Mammary epithelial cell (primary cell): ENCODE measurements at regions of chr9 and their contacts with region 1.

Region 1: GRCh38 chr9:98034593-98035546 is 21.7 kb upstream of the NANS start:
- DNase-seq: peak; percentile 50
- H3K4me3 ChIP-seq: no peak overlapping the region
- H3K27ac ChIP-seq: no peak overlapping the region
- H3K4me1 ChIP-seq: peaks cover 8% of the 10 kb centered on the region
- H3K27me3 ChIP-seq: no peaks in the 10 kb centered on the region
- CTCF ChIP-seq: peak; percentile 85

Region 2: GRCh38 chr9:97703437-97704344 is 331.2 kb before region 1 on chr9:
- CTCF ChIA-PET with region 1: no interaction called
- dilution Hi-C with region 1: no loop called
- in situ Hi-C with region 1: no loop called
- intact Hi-C with region 1: loop called (anchors 5 kb)
- DNase-seq: peak; percentile 94
- H3K4me3 ChIP-seq: peak overlapping the region in 1 of 3 experiments; percentile 15
- H3K27ac ChIP-seq: peak overlapping the region; percentile 73
- H3K4me1 ChIP-seq: peaks cover 37% of the 10 kb centered on the region
- H3K27me3 ChIP-seq: peaks cover 6% of the 10 kb centered on the region
- CTCF ChIP-seq: no peak

Region 3: GRCh38 chr9:97906236-97906831 is 128.5 kb before region 1 on chr9:
- CTCF ChIA-PET with region 1: interaction called, 12 read pairs
- dilution Hi-C with region 1: no loop called
- in situ Hi-C with region 1: no loop called
- intact Hi-C with region 1: no loop called
- DNase-seq: no peak
- H3K4me3 ChIP-seq: no peak overlapping the region
- H3K27ac ChIP-seq: no peak overlapping the region
- H3K4me1 ChIP-seq: peaks cover 21% of the 10 kb centered on the region
- H3K27me3 ChIP-seq: no peaks in the 10 kb centered on the region
- CTCF ChIP-seq: no peak

Region 4: GRCh38 chr9:97982683-97983588 is 51.9 kb before region 1 on chr9 and contains the start of gene ANP32B:
- CTCF ChIA-PET with region 1: no interaction called
- dilution Hi-C with region 1: no loop called
- in situ Hi-C with region 1: no loop called
- intact Hi-C with region 1: loop called (anchors 2 kb)
- DNase-seq: peak; percentile 86
- H3K4me3 ChIP-seq: peak within 1 kb of the TSS; percentile 82 to 90 (median 88)
- H3K27ac ChIP-seq: peak within 1 kb of the TSS; percentile 94
- H3K4me1 ChIP-seq: peaks cover 43% of the 10 kb centered on the region
- H3K27me3 ChIP-seq: no peaks in the 10 kb centered on the region
- CTCF ChIP-seq: peak; percentile 65 to 70
- total RNA-seq, gene ANP32B: 8.2 to 164 TPM

Region 5: DNA sequence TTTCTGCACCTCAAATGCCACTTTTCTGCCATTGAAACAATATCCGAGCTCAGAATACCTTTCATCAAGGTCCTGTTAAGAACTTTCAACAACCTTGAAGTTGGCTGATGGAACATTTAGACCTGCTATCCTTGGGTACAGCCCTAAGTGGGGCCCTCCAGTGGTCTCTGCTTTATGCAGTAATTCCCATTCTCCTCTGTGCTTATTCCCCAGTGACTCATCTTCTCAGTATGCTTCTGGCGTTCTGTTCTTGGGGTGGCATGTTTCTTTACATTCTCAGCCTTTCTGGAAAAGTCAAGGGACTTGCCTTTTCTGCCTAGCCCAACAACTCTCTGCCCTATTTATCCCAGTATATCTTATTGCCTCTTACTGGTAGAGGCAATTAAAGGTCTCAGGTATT is 44.6 kb before region 1 on chr9:
- CTCF ChIA-PET with region 1: no interaction called
- dilution Hi-C with region 1: loop called (anchors 5 kb)
- in situ Hi-C with region 1: no loop called
- intact Hi-C with region 1: no loop called
- DNase-seq: peak; percentile 46
- H3K4me3 ChIP-seq: no peak overlapping the region
- H3K27ac ChIP-seq: no peak overlapping the region
- H3K4me1 ChIP-seq: peaks cover 35% of the 10 kb centered on the region
- H3K27me3 ChIP-seq: no peaks in the 10 kb centered on the region
- CTCF ChIP-seq: peak in 1 of 2 donors; percentile 25

Region 6: GRCh38 chr9:98056269-98057137 is 21.6 kb after region 1 on chr9 and contains the start of gene NANS:
- CTCF ChIA-PET with region 1: interaction called, 21 read pairs
- dilution Hi-C with region 1: no loop called
- in situ Hi-C with region 1: no loop called
- intact Hi-C with region 1: loop called (anchors 2 kb)
- DNase-seq: peak; percentile 96
- H3K4me3 ChIP-seq: peak within 1 kb of the TSS; percentile 56 to 95 (median 57)
- H3K27ac ChIP-seq: peak within 1 kb of the TSS; percentile 62
- H3K4me1 ChIP-seq: peaks cover 10% of the 10 kb centered on the region
- H3K27me3 ChIP-seq: no peaks in the 10 kb centered on the region
- CTCF ChIP-seq: no peak
- total RNA-seq, gene NANS: 44.7 to 52.4 TPM